ENCODE measurements at regions of chr5 and their contacts with region 1.

Region 1: GRCh38 chr5:169980418-169981053 is at the start of gene INSYN2B:
- DNase-seq: peak; percentile 71
- H3K4me3 Mint-ChIP-seq: no peak within 1 kb of the TSS
- H3K27ac Mint-ChIP-seq: no peak within 1 kb of the TSS
- H3K4me1 Mint-ChIP-seq: no peaks in the 10 kb centered on the region
- H3K27me3 Mint-ChIP-seq: peaks cover 90% of the 10 kb centered on the region
- CTCF ChIP-seq: peak; percentile 50
- total RNA-seq, gene INSYN2B: not detected in 2 replicates

Region 2: DNA sequence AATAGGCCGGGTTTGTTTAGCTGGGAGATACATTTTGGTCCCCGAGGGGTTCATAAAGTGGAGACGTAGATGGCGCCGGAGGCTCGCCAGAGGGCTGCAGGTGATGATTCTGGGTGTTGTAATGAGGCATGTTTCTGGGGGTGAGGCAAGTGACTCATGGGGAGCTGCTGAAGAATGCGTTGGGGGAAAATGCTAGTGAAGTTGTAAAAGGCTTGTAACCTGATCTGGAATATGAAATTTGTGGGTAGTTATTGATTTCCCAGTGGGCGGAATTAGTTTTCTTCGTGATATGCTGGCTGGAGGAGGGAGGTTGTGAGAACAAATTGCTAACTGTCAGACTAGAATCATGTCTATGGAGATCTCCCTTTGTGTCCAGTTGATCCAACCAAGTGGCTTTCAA is 185.2 kb before region 1 on chr5:
- CTCF ChIA-PET with region 1: interaction called, 3 read pairs
- intact Hi-C with region 1: loop called (anchors 2 kb)
- DNase-seq: peak; percentile 47
- H3K4me3 Mint-ChIP-seq: peak overlapping the region; percentile 29
- H3K27ac Mint-ChIP-seq: peak overlapping the region; percentile 18
- H3K4me1 Mint-ChIP-seq: peaks cover 12% of the 10 kb centered on the region
- H3K27me3 Mint-ChIP-seq: peaks cover 37% of the 10 kb centered on the region
- CTCF ChIP-seq: no peak

Region 3: GRCh38 chr5:169826618-169827017 is 153.9 kb before region 1 on chr5:
- CTCF ChIA-PET with region 1: no interaction called
- intact Hi-C with region 1: no loop called
- DNase-seq: no peak
- H3K4me3 Mint-ChIP-seq: no peak overlapping the region
- H3K27ac Mint-ChIP-seq: no peak overlapping the region
- H3K4me1 Mint-ChIP-seq: no peaks in the 10 kb centered on the region
- H3K27me3 Mint-ChIP-seq: peaks cover 49% of the 10 kb centered on the region
- CTCF ChIP-seq: no peak

Region 4: DNA sequence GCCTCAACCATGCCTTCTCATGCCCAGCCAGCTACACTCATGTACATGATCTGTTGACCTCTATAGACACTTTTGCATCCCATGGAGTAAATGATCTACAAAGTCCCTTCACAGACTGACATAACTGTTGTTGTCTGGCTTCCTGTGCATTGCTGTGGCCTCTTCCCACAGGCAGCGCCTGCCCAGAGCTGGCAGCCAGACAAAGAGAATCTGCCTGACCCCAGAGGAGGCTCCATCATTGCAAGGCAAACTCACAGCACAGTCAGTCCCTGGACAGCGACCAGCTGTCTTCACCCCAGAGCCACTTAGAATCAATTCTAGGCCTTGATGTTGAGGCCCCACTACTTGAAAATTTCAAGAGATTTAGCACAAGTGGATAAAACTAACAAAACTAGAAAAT is 65.8 kb before region 1 on chr5:
- CTCF ChIA-PET with region 1: no interaction called
- intact Hi-C with region 1: loop called (anchors 5 kb)
- DNase-seq: no peak
- H3K4me3 Mint-ChIP-seq: no peak overlapping the region
- H3K27ac Mint-ChIP-seq: no peak overlapping the region
- H3K4me1 Mint-ChIP-seq: no peaks in the 10 kb centered on the region
- H3K27me3 Mint-ChIP-seq: peaks cover 57% of the 10 kb centered on the region
- CTCF ChIP-seq: no peak

Measured in Calu3 (cell line).